ENCODE measurements at regions of chr14 and their contacts with region 1.

Region 1: GRCh38 chr14:78566026-78566858 is 396.1 kb downstream of the NRXN3 start:
- DNase-seq: peak; percentile 75 to 83
- H3K4me3 ChIP-seq: no peak overlapping the region
- H3K27ac ChIP-seq: no peak overlapping the region
- H3K4me1 ChIP-seq: no peaks in the 10 kb centered on the region
- H3K27me3 ChIP-seq: no peaks in the 10 kb centered on the region
- CTCF ChIP-seq: peak in 5 of 6 experiments; percentile 41 to 83 (median 71)
- POLR2A ChIP-seq: no peak

Region 2: GRCh38 chr14:77654001-77654441 is 912.2 kb before region 1 on chr14:
- intact Hi-C with region 1: loop called (anchors 10 kb)
- DNase-seq: no peak
- H3K4me3 ChIP-seq: no peak overlapping the region
- H3K27ac ChIP-seq: no peak overlapping the region
- H3K4me1 ChIP-seq: no peaks in the 10 kb centered on the region
- H3K27me3 ChIP-seq: no peaks in the 10 kb centered on the region
- CTCF ChIP-seq: no peak
- POLR2A ChIP-seq: no peak

Region 3: DNA sequence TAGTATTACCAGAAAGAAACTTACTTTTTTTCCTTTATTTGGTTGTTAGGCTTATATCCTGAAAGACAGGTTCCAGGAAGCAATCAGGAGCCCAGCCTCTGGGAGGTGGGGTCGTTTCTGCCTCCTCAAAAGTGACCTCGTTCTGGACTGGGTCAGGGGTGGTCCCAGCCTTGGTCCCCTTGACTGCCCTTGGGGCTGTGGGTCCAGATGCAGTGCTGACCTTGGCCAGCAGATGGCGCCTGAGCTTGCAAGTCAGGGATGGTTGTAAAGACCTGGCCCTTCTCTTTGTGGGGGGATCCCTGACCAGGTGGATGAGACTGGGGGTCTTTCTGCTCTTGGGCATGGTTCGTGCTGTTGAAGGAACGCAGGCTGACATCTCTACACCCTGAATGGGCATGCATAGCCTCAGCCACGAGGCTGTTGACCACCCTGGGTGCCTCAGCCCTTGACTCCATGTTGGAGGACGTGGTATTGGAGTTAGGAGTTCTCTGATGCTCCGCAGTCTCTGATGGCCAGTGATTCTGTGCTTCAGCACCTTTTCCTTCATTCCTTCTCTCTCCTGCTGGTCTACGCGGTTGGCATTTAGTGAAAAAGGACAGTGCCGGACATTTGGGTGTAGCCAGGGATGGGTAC is 704.0 kb before region 1 on chr14:
- intact Hi-C with region 1: loop called (anchors 10 kb)
- DNase-seq: peak; percentile 79 to 82
- H3K4me3 ChIP-seq: no peak overlapping the region
- H3K27ac ChIP-seq: peak overlapping the region in 2 of 3 donors; percentile 0 to 29
- H3K4me1 ChIP-seq: peaks cover 0 to 5% of the 10 kb centered on the region in 2 donors
- H3K27me3 ChIP-seq: no peaks in the 10 kb centered on the region
- CTCF ChIP-seq: peak; percentile 91 to 98 (median 93)
- POLR2A ChIP-seq: no peak